Gastrocnemius medialis (tissue), 4 donors: ENCODE measurements at regions of chr7 and their contacts with region 1.

Region 1: DNA sequence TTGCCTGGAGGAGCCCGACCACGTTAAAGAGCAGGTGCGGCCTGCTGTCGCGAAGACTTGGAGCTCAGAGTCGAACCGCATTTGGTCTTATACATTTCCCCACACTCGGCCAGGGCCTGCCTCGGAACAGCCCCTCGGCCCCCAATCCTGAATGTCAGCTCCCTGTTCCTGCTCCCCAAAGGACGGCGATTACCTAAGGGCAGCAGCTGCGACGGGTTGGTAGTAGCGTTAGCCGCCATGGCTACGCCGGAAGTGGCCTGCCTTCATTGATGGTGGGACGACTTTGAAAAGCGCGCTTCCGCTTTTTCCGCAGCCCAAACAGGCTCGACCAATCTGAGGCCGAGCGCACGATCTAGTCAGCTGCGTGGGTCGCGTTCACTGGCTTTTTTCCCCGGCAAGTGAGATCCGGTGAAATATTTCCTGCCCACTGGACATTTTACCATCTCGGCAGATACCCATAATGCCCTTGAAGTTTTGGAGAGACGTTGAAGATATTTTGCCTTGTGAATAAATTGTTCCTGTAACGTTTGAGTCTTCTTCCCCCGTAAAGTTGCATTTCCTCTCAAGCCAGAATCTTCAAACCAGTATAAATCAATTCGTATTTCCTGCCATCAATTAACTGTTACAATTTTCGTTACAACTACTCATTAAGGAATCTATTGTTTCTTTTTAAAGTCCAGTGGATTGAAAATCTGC is at the start of gene LSM5:
- DNase-seq: peak; percentile 86 to 90
- ATAC-seq: peak; percentile 93
- H3K4me3 ChIP-seq: peak within 1 kb of the TSS; percentile 71 to 84 (median 82)
- H3K27ac ChIP-seq: peak within 1 kb of the TSS; percentile 86 to 92 (median 88)
- H3K4me1 ChIP-seq: peaks cover 13 to 18% of the 10 kb centered on the region in 2 donors
- H3K27me3 ChIP-seq: no peaks in the 10 kb centered on the region
- CTCF ChIP-seq: no peak
- POLR2A ChIP-seq: peak in 1 of 2 donors; percentile 40
- total RNA-seq, gene LSM5: 11.7 to 28.7 (median 14.8) TPM

Region 2: GRCh38 chr7:31583526-31583925 is 906.7 kb before region 1 on chr7:
- in situ Hi-C with region 1: no loop called
- intact Hi-C with region 1: no loop called
- DNase-seq: no peak
- ATAC-seq: no peak
- H3K4me3 ChIP-seq: no peak overlapping the region
- H3K27ac ChIP-seq: no peak overlapping the region
- H3K4me1 ChIP-seq: no peaks in the 10 kb centered on the region
- H3K27me3 ChIP-seq: no peaks in the 10 kb centered on the region
- CTCF ChIP-seq: no peak
- POLR2A ChIP-seq: no peak

Region 3: DNA sequence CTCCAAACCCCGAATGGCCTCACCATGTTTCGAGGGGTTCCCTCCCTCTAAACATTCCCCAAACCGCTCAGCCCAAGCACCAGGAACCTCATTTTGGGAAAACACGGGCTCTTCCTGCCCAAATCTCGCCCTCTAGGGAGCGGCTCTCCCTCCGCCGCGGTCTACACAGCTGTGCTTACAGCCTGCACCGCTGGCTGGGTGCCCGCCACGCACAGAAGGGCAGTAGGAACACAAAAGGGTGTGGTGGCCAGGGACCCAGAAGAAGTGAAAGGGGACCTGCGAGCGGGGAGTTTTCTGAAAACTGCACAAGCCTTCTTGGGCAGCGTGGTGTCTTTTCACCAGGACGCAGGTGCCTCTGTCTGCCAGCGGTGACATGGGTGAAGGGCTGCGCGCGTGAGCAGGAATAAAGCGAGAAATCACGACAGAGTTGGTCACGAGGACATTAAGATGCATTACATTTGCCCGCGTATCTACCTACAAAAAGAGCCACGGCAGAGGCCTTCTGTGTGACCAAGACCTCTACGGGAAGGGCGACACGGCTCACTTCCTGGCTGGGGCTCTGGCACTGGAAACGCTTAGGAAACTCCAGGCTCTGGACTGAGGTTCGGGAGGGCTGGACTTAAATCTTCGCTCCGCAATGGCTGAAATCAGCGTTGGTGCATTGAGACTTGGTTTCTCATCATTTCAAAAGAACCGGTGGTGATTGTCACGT is 171.8 kb before region 1 on chr7:
- in situ Hi-C with region 1: no loop called
- intact Hi-C with region 1: no loop called
- DNase-seq: no peak
- ATAC-seq: no peak
- H3K4me3 ChIP-seq: peak overlapping the region in 3 of 4 donors; percentile 20 to 21 (median 21)
- H3K27ac ChIP-seq: no peak overlapping the region
- H3K4me1 ChIP-seq: no peaks in the 10 kb centered on the region
- H3K27me3 ChIP-seq: peaks cover 0 to 6% (median 0%) of the 10 kb centered on the region in 3 donors
- CTCF ChIP-seq: no peak
- POLR2A ChIP-seq: no peak

Region 4: GRCh38 chr7:32533276-32534029 is 43.2 kb after region 1 on chr7:
- in situ Hi-C with region 1: no loop called
- intact Hi-C with region 1: loop called (anchors 5 kb)
- DNase-seq: no peak
- ATAC-seq: no peak
- H3K4me3 ChIP-seq: no peak overlapping the region
- H3K27ac ChIP-seq: peak overlapping the region in 1 of 4 donors; percentile 7
- H3K4me1 ChIP-seq: peaks cover 10 to 20% of the 10 kb centered on the region in 2 donors
- H3K27me3 ChIP-seq: no peaks in the 10 kb centered on the region
- CTCF ChIP-seq: no peak
- POLR2A ChIP-seq: no peak

Region 5: DNA sequence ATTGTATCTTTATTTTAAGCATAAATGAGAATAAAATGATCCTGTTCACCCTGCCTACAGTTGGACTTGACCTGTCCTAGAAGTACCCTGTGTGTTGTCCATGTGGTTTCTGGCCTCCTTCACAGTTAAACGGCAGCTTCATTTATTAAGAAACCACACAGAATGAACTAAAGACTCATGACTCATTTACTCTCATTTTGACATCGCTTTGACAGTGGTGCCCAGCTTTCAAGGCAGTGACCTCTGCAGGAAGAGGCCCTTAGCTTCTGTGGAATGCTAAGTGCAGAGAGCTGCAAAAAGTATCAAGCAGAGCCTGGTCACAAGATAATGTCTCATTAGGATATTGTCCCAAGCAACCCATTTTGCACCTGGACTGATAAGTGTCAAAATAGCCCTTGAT is 98.4 kb after region 1 on chr7:
- in situ Hi-C with region 1: no loop called
- intact Hi-C with region 1: loop called (anchors 5 kb)
- DNase-seq: no peak
- ATAC-seq: no peak
- H3K4me3 ChIP-seq: no peak overlapping the region
- H3K27ac ChIP-seq: peak overlapping the region; percentile 15 to 71 (median 44)
- H3K4me1 ChIP-seq: peaks cover 14 to 16% of the 10 kb centered on the region in 2 donors
- H3K27me3 ChIP-seq: no peaks in the 10 kb centered on the region
- CTCF ChIP-seq: no peak
- POLR2A ChIP-seq: no peak